ENCODE measurements at regions of chr12 and their contacts with region 1.

Region 1: DNA sequence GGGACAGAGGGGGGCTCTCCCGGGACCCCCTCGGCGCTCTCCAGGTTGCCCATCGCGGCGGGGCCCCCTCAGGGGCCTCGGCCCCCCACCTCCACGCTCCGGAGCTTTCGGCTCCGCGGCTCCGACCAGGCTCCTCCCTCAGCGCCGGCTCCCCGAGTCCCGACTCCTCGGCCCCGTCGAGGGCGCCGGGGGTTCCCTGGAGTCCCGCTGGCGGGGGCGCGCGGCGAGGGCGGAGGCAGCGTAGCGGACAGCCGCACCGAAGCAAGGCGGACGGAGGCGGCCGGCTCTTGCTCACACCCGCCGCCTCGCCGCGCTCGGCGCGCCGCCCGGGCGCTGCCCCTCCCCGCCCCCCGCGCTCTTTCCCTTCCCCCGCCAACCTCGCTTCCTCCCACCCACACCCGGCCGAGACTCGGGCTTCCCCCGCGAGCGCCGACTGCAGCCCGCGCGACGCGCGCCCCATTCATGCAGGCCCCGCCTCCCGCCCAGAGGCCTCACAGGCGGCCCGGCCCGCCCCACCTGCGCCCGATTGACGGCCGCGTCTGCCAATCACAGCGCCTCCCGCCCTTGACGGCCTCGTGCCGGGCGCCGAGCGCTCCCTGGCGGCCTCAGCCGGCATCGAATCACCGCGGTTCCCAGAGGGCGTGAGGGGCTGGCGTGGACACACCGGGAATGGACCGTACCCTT is at the start of gene FMNL3:
- DNase-seq: peak; percentile 96 to 99 (median 99)
- ATAC-seq: peak; percentile 93 to 95
- H3K4me3 Mint-ChIP-seq: peak within 1 kb of the TSS; percentile 86 to 96 (median 90)
- H3K27ac Mint-ChIP-seq: peak within 1 kb of the TSS; percentile 80 to 96 (median 92)
- H3K4me1 Mint-ChIP-seq: peaks cover 28 to 49% (median 46%) of the 10 kb centered on the region in 4 donors
- H3K27me3 Mint-ChIP-seq: peaks cover 0 to 3% (median 1%) of the 10 kb centered on the region in 5 donors
- polyA plus RNA-seq, gene FMNL3: 7.6 to 12.1 (median 8.4) TPM

Region 2: DNA sequence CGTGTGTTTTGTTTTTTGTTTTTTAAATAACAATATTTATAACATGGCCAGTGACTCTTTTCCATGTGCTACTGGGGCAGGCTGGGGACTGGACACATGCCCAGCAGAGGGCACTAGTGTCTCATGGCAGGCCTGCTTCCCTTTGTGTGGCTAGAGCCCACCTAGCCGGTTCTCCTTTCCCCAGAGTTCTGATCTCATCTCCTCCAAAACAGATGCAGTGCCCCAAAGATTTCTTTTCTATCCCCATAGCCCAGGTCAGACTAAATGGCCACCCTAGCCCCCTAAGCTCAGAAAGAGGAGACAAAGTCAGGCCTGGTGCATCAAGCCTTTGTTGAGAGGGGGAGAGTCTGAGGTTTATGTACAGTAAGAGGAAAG is 62.7 kb before region 1 on chr12:
- POLR2A ChIA-PET with region 1: interaction called, 93 read pairs
- DNase-seq: peak; percentile 71 to 93 (median 84)
- ATAC-seq: peak; percentile 97 to 99
- H3K4me3 Mint-ChIP-seq: peak overlapping the region in 8 of 10 donors; percentile 3 to 68 (median 29)
- H3K27ac Mint-ChIP-seq: peak overlapping the region; percentile 24 to 95 (median 77)
- H3K4me1 Mint-ChIP-seq: peaks cover 21 to 47% (median 39%) of the 10 kb centered on the region in 4 donors
- H3K27me3 Mint-ChIP-seq: no peaks in the 10 kb centered on the region

Region 3: DNA sequence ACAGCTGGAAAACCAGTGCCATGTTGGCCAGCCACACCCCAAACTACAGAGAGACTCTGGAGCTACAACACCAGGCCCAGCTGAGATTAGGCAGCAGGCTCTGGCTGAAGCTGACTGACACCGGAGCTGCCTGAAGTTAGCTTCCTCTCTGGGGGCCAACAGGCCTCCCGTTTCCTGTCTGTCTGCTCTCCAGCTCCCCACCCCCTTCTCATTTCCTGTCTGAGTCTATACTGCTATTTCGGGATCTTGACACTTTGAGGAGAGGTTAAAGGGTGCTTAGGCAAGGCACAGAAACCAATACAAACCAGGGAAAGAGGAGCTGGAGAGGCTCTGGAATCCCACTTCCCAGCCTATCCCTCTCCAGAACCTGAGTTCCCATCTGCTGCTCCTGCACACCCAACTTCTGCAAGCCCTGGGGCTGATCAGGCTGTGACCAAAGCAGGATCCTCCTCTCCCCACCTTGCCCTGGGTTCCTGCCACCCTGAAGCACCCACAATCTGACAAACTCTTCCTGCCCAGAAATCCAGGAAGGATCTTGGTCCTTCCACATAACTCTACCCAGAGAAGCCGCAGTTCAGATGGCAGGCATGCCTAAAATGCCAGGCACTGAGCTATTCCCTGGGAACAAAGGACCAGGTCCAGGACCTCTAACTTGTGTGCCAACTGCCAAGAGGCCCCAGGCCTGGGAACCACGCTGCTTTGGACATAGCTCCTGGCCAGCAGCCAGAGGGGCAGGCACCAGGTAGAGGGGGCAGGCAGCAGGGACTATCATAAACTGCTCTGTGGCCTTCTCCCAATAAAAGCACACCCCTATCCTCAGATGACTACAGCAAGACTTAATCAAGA is 44.0 kb before region 1 on chr12:
- POLR2A ChIA-PET with region 1: interaction called, 81 read pairs
- DNase-seq: peak; percentile 50 to 91 (median 72)
- ATAC-seq: peak; percentile 98 to 100
- H3K4me3 Mint-ChIP-seq: peak overlapping the region; percentile 71 to 88 (median 84)
- H3K27ac Mint-ChIP-seq: peak overlapping the region; percentile 92 to 99 (median 98)
- H3K4me1 Mint-ChIP-seq: peaks cover 56 to 88% (median 83%) of the 10 kb centered on the region in 4 donors
- H3K27me3 Mint-ChIP-seq: no peaks in the 10 kb centered on the region

Region 4: GRCh38 chr12:49673446-49674317 is 33.6 kb before region 1 on chr12:
- POLR2A ChIA-PET with region 1: interaction called, 81 read pairs
- DNase-seq: no peak
- ATAC-seq: peak in 1 of 2 donors; percentile 11
- H3K4me3 Mint-ChIP-seq: peak overlapping the region in 9 of 10 donors; percentile 30 to 76 (median 40)
- H3K27ac Mint-ChIP-seq: peak overlapping the region; percentile 80 to 99 (median 95)
- H3K4me1 Mint-ChIP-seq: peaks cover 50 to 84% (median 82%) of the 10 kb centered on the region in 4 donors
- H3K27me3 Mint-ChIP-seq: no peaks in the 10 kb centered on the region

Region 5: GRCh38 chr12:49748306-49748705 is 41.0 kb after region 1 on chr12:
- POLR2A ChIA-PET with region 1: no interaction called
- DNase-seq: no peak
- ATAC-seq: no peak
- H3K4me3 Mint-ChIP-seq: peak overlapping the region in 9 of 10 donors; percentile 19 to 58 (median 42)
- H3K27ac Mint-ChIP-seq: peak overlapping the region in 7 of 10 donors; percentile 20 to 77 (median 49)
- H3K4me1 Mint-ChIP-seq: peaks cover 34 to 94% (median 88%) of the 10 kb centered on the region in 4 donors
- H3K27me3 Mint-ChIP-seq: no peaks in the 10 kb centered on the region

Measured in naive thymus-derived CD8-positive, alpha-beta T cell (primary cell).